ENCODE measurements at regions of chr10 and their contacts with region 1.

Region 1: DNA sequence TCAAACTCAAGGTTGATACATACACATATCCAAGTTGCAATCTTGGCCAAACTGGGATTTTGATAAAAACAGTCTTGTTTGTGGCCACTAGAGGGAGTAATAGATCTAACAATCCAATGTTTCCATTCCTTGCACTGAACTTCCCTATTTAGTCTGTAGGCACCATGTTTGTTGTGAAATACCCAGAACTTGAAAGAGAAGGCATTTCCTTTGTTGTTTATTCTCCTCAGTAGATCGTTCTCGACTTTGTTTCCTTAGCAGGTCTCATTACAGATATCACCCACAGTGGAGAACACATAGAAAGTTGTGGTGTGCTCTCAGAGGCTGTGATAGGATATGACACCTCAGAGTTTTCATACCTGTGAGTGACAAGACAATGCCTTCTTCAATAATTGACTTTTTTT is 70.3 kb upstream of the MXI1 start:
- DNase-seq: no peak
- H3K4me3 ChIP-seq: no peak overlapping the region
- H3K27ac ChIP-seq: peak overlapping the region; percentile 61
- H3K4me1 ChIP-seq: peaks cover 32% of the 10 kb centered on the region
- H3K27me3 ChIP-seq: no peaks in the 10 kb centered on the region
- CTCF ChIP-seq: peak; percentile 84

Region 2: GRCh38 chr10:110036640-110037039 is 100.5 kb before region 1 on chr10:
- intact Hi-C with region 1: no loop called
- DNase-seq: no peak
- H3K4me3 ChIP-seq: no peak overlapping the region
- H3K27ac ChIP-seq: no peak overlapping the region
- H3K4me1 ChIP-seq: peaks cover 97% of the 10 kb centered on the region
- H3K27me3 ChIP-seq: no peaks in the 10 kb centered on the region
- CTCF ChIP-seq: no peak

Region 3: GRCh38 chr10:110093722-110094121 is 43.4 kb before region 1 on chr10:
- intact Hi-C with region 1: no loop called
- DNase-seq: no peak
- H3K4me3 ChIP-seq: no peak overlapping the region
- H3K27ac ChIP-seq: no peak overlapping the region
- H3K4me1 ChIP-seq: peaks cover 66% of the 10 kb centered on the region
- H3K27me3 ChIP-seq: no peaks in the 10 kb centered on the region
- CTCF ChIP-seq: no peak

Region 4: DNA sequence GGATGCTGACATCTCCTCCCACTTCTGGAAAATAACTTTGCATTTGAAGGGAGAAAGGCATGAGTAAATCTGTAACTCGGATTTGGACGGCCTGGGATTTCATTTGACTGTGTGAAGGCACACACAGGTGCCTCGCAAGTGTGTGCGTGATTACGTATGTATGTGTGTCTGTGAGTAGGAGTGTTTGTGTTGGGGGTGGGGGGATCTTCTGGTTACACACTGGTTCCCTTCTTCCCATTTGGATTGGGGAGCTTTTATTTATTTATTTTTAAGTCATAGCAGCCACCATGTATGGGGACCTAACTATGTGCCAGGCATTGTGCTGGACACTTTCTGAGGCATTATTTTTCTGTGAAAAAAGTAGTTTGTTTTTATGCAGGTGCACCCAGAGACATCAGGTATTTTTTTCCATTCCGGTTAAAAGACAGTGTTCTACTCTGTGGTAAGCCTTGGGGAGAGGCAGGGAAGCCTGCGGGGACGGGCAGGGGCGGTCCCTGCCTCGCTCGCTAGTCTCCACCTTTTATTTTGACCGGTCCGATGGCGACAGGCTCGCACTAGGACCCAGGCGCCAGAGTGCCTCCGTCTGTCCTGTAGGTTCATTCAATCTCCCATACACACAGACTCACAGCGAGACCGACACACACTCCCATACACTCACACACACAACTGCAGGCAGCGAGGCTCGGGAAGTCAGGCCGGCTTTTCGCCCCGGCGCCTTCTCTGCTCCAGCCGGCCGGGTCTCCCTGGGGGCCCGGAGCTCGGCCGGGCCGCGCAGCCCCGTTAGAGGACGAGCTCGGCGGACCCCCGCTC is 70.1 kb after region 1 on chr10 and contains the start of gene MXI1:
- intact Hi-C with region 1: loop called (anchors 10 kb)
- DNase-seq: peak; percentile 83
- H3K4me3 ChIP-seq: peak within 1 kb of the TSS; percentile 78
- H3K27ac ChIP-seq: peak within 1 kb of the TSS; percentile 96
- H3K4me1 ChIP-seq: peaks cover 39% of the 10 kb centered on the region
- H3K27me3 ChIP-seq: no peaks in the 10 kb centered on the region
- CTCF ChIP-seq: no peak
- total RNA-seq, gene MXI1: 60.0 TPM

Measured in left ventricle myocardium inferior (tissue), 1 donor.